GM10248 (cell line): ENCODE measurements at regions of chr16 and their contacts with region 1.

Region 1: GRCh38 chr16:72832621-72833248 is 215.2 kb downstream of the ZFHX3 start:
- DNase-seq: peak; percentile 81
- CTCF ChIP-seq: peak; percentile 100

Region 2: DNA sequence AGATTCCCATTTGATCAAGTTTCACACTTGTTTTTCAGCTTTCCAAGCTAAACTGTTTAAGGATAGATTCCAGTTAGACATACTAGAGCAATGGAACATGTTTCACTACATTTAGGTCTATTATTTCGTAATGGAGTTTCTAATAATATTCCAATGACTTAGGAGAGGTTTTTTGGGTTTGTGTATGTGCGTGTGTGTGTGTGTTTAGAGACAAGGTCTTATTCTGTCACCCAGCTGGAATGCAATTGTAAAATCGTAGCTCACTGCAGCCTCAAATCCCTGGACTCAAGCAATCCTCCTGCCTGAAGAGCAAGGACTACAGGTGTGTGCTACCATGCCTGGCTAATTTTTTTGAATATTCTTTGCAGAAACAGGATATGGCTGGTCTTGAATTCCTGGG is 211.1 kb before region 1 on chr16:
- CTCF ChIA-PET with region 1: no interaction called
- POLR2A ChIA-PET with region 1: no interaction called
- DNase-seq: no peak
- CTCF ChIP-seq: no peak

Region 3: DNA sequence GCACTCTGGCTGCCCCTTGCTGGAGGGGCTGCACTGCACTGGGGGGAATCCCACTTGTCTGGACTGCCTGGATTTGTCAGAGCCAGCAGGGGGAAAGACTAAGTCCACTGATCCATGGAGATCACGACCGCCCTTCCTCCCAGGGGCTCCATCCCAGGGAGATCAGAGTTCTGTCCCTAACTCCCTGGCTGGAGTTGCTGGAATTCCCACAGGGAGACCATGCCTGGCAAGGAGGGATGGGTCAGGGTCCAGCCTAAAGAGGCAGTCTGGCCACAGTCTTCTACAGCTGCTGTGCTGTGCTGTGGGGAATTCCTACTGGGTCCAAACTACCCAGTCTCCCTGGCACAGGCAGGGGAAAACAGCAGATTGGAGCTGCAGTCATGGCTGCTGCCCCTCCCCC is 96.7 kb before region 1 on chr16:
- CTCF ChIA-PET with region 1: no interaction called
- POLR2A ChIA-PET with region 1: no interaction called
- DNase-seq: no peak
- CTCF ChIP-seq: no peak

Region 4: GRCh38 chr16:72794319-72794718 is 38.4 kb before region 1 on chr16:
- CTCF ChIA-PET with region 1: interaction called, 11 read pairs
- POLR2A ChIA-PET with region 1: no interaction called
- DNase-seq: no peak
- CTCF ChIP-seq: no peak

Region 5: DNA sequence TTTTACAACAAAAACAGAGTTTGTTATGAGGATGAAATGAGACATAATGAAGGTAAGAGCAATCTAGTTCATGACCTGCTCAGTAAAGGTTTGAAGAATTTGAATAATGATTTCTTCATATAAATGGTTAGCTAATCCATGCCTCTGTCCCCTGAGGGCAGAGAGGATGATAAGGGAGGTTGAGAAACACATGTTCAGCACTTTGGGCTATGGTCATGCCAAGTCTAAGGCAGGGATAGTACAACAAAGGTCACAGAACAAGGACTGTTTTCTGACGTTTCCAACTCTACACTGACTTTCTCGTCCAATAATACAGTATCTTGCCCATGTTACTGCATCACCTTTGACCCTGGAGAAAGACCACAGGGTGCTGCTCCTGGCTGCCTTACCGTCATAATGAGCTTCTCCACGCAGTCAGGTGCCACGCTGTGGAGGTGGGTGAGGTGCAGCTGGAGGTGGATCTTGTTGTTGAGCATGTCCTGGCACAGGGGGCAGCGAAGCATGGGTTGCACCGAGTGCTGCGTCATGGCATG is 21.5 kb before region 1 on chr16:
- CTCF ChIA-PET with region 1: interaction called, 34 read pairs
- POLR2A ChIA-PET with region 1: no interaction called
- DNase-seq: no peak
- CTCF ChIP-seq: no peak

Region 6: GRCh38 chr16:72847187-72848027 is 14.7 kb after region 1 on chr16:
- CTCF ChIA-PET with region 1: interaction called, 94 read pairs
- POLR2A ChIA-PET with region 1: no interaction called
- DNase-seq: peak; percentile 67
- CTCF ChIP-seq: peak; percentile 74

Region 7: DNA sequence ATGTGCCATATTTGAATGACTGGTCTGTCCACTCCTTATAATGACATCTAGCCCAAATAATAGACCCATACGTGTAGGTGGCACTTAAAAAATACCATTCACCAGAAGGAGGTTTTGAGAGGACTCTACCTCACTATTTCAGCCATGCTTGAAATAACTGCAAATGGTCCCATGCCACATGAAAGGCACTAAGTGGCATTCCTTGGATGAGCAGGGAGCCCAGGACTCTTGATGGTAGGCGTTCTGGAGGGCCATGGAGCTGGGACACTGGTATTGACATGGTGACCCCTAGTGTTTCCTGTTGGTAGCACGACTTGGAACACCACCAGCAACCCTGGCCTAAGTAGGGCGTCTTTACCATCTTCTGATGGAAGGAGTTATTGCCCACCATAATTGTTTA is 363.9 kb after region 1 on chr16:
- CTCF ChIA-PET with region 1: interaction called, 10 read pairs
- POLR2A ChIA-PET with region 1: interaction called, 4 read pairs
- DNase-seq: peak; percentile 69
- CTCF ChIP-seq: peak; percentile 58